Mammary epithelial cell (primary cell): ENCODE measurements at regions of chr15 and their contacts with region 1.

Region 1: DNA sequence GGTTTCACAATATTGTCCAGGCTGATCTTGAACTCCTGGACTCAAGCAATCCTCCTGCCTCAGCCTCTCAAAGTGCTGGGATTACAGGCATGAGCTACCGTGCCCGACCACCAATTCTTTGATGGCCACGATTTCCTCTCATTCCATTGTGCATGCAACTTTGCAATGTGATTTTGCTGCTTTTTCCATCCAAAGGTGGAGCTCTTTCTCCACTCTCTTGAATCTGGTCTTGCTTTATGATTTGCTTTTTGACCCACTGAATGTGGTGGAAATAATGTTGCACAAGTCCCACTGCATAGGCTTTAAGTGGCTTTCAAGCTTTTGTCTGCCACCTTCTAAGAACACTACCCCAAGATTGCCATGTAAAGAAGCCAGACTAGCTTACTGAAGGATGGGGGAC is 10.6 kb downstream of the RPS27L start:
- DNase-seq: no peak
- H3K4me3 ChIP-seq: no peak overlapping the region
- H3K27ac ChIP-seq: no peak overlapping the region
- H3K4me1 ChIP-seq: no peaks in the 10 kb centered on the region
- H3K27me3 ChIP-seq: no peaks in the 10 kb centered on the region
- CTCF ChIP-seq: no peak

Region 2: GRCh38 chr15:63063164-63063756 is 83.4 kb before region 1 on chr15:
- CTCF ChIA-PET with region 1: no interaction called
- dilution Hi-C with region 1: loop called (anchors 5 kb)
- in situ Hi-C with region 1: no loop called
- intact Hi-C with region 1: no loop called
- DNase-seq: no peak
- H3K4me3 ChIP-seq: no peak overlapping the region
- H3K27ac ChIP-seq: no peak overlapping the region
- H3K4me1 ChIP-seq: no peaks in the 10 kb centered on the region
- H3K27me3 ChIP-seq: no peaks in the 10 kb centered on the region
- CTCF ChIP-seq: no peak